Calu3 (cell line): ENCODE measurements at regions of chrX and their contacts with region 1.

Region 1: GRCh38 chrX:112832481-112833100 is 8.0 kb downstream of the AMOT start:
- DNase-seq: peak; percentile 81
- H3K4me3 Mint-ChIP-seq: no peak overlapping the region
- H3K27ac Mint-ChIP-seq: no peak overlapping the region
- H3K4me1 Mint-ChIP-seq: peaks cover 36% of the 10 kb centered on the region
- H3K27me3 Mint-ChIP-seq: no peaks in the 10 kb centered on the region
- CTCF ChIP-seq: no peak

Region 2: GRCh38 chrX:112889400-112889799 is 56.8 kb after region 1 on chrX:
- CTCF ChIA-PET with region 1: no interaction called
- intact Hi-C with region 1: no loop called
- DNase-seq: no peak
- H3K4me3 Mint-ChIP-seq: no peak overlapping the region
- H3K27ac Mint-ChIP-seq: no peak overlapping the region
- H3K4me1 Mint-ChIP-seq: no peaks in the 10 kb centered on the region
- H3K27me3 Mint-ChIP-seq: no peaks in the 10 kb centered on the region
- CTCF ChIP-seq: no peak

Region 3: GRCh38 chrX:114058988-114059418 is 1226.4 kb after region 1 on chrX:
- CTCF ChIA-PET with region 1: no interaction called
- intact Hi-C with region 1: loop called (anchors 5 kb)
- DNase-seq: peak; percentile 10
- H3K4me3 Mint-ChIP-seq: peak overlapping the region; percentile 67
- H3K27ac Mint-ChIP-seq: peak overlapping the region; percentile 84
- H3K4me1 Mint-ChIP-seq: no peaks in the 10 kb centered on the region
- H3K27me3 Mint-ChIP-seq: no peaks in the 10 kb centered on the region
- CTCF ChIP-seq: no peak